B cell (primary cell): ENCODE measurements at regions of chr14 and their contacts with region 1.

Region 1: GRCh38 chr14:51884086-51884927 is 23.9 kb downstream of the GNG2 start:
- DNase-seq: peak; percentile 40
- ATAC-seq: peak; percentile 14
- H3K4me3 ChIP-seq: no peak overlapping the region
- H3K4me3 Mint-ChIP-seq: peak overlapping the region; percentile 17
- H3K27ac ChIP-seq: peak overlapping the region; percentile 8 to 19
- H3K27ac Mint-ChIP-seq: peak overlapping the region; percentile 67
- H3K4me1 ChIP-seq: peaks cover 31 to 39% of the 10 kb centered on the region in 2 donors
- H3K4me1 Mint-ChIP-seq: peaks cover 55% of the 10 kb centered on the region
- H3K27me3 ChIP-seq: no peaks in the 10 kb centered on the region
- H3K27me3 Mint-ChIP-seq: no peaks in the 10 kb centered on the region
- CTCF ChIP-seq: no peak

Region 2: DNA sequence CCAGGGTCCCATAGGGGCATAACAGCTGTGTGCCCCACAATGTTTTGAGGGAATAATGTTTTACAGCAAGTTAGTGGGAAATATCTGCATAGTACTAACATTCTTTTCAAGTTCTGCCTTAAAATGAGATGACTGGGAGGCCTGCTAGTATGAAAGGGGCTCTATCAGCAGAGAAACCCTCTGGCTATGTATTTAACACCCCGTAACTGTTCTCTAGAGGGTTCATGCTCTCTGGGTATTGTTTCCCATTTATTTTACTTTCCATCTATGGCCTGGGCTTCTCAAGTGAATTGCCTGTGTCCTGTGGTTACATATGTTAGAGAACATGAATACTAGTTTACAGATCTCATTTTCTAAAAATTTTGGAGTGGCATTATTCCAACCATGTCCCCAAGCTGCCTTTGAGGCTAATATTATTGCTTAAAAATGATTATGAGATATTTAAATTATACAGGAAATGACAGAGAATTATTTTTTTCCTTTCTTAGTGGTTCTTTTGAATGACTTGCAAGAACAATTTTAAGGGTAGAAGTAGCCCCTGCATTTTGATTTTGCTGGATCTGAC is 13.6 kb after region 1 on chr14:
- CTCF ChIA-PET with region 1: interaction called, 3 read pairs
- POLR2A ChIA-PET with region 1: no interaction called
- intact Hi-C with region 1: loop called (anchors 2 kb)
- DNase-seq: no peak
- ATAC-seq: no peak
- H3K4me3 ChIP-seq: no peak overlapping the region
- H3K4me3 Mint-ChIP-seq: no peak overlapping the region
- H3K27ac ChIP-seq: no peak overlapping the region
- H3K27ac Mint-ChIP-seq: peak overlapping the region; percentile 62
- H3K4me1 ChIP-seq: peaks cover 4 to 6% of the 10 kb centered on the region in 2 donors
- H3K4me1 Mint-ChIP-seq: peaks cover 29% of the 10 kb centered on the region
- H3K27me3 ChIP-seq: no peaks in the 10 kb centered on the region
- H3K27me3 Mint-ChIP-seq: no peaks in the 10 kb centered on the region
- CTCF ChIP-seq: no peak